ENCODE measurements at regions of chr4 and their contacts with region 1.

Region 1: GRCh38 chr4:15001869-15002658 is at the start of gene CPEB2:
- DNase-seq: peak; percentile 93
- H3K4me3 Mint-ChIP-seq: peak within 1 kb of the TSS; percentile 87
- H3K27ac Mint-ChIP-seq: peak within 1 kb of the TSS; percentile 94
- H3K4me1 Mint-ChIP-seq: peaks cover 16% of the 10 kb centered on the region
- H3K27me3 Mint-ChIP-seq: no peaks in the 10 kb centered on the region
- total RNA-seq, gene CPEB2: 9.5 to 9.8 TPM

Region 2: DNA sequence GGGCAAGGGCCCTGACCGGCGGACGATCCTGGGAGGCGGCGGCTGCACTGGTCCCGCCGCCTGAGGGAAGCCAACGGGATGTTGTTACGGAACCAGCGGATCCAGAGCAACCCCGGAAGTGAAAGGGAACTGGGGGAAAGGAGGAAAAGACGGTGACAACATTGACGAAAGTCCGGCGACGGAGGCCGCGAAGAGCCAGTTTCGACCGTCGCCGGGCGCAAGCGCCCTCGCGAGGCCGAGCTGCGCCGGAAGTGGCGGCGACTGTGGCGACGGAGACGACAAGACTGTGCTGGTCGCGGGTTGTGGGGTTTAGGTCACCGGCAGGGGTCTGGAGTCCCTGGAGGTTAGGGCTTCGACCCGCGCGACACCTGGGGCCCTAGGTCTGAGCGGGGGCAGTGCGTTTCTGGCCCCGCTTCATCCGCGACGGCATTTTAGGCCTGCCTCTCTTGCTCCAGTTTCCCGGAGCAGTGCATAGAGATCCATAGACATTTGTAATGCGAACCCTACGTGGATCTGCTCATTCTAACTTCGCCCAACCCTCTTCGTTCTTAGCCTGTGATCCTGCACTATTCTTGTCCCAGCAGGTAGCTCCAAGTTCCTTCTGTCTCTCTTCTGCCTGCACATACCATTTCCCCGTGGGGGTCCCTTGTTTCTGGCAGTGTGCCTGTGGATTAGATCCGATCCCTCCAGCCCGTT is 1374.3 kb before region 1 on chr4 and contains the start of gene BOD1L1:
- CTCF ChIA-PET with region 1: no interaction called
- POLR2A ChIA-PET with region 1: no interaction called
- intact Hi-C with region 1: loop called (anchors 2 kb)
- DNase-seq: peak; percentile 89
- H3K4me3 Mint-ChIP-seq: peak within 1 kb of the TSS; percentile 97
- H3K27ac Mint-ChIP-seq: peak within 1 kb of the TSS; percentile 94
- H3K4me1 Mint-ChIP-seq: peaks cover 41% of the 10 kb centered on the region
- H3K27me3 Mint-ChIP-seq: no peaks in the 10 kb centered on the region
- total RNA-seq, gene BOD1L1: 25.5 to 31.2 TPM

Region 3: DNA sequence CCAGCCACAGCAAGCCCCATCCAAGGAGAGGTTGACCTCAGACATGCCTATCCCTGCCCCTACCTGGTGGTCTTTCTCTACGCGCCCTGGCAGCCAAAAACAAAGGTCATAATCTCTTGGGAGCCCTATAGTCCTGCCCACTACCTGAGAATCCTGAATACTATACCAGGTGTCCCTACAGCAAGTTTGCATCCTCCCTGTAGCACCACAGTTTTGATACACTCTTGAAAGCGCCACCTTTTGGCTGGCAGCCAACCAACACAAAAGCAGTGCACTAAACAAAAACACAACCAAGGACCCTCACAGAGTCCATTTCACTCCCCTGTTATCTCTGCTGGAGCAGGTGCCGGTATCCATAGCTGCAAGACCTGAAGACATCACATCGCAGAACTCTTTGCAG is 523.6 kb before region 1 on chr4:
- CTCF ChIA-PET with region 1: no interaction called
- POLR2A ChIA-PET with region 1: no interaction called
- intact Hi-C with region 1: no loop called
- DNase-seq: no peak
- H3K4me3 Mint-ChIP-seq: no peak overlapping the region
- H3K27ac Mint-ChIP-seq: no peak overlapping the region
- H3K4me1 Mint-ChIP-seq: no peaks in the 10 kb centered on the region
- H3K27me3 Mint-ChIP-seq: no peaks in the 10 kb centered on the region

Region 4: GRCh38 chr4:14920759-14921320 is 81.2 kb before region 1 on chr4:
- CTCF ChIA-PET with region 1: interaction called, 3 read pairs
- POLR2A ChIA-PET with region 1: no interaction called
- intact Hi-C with region 1: loop called (anchors 2 kb)
- DNase-seq: peak; percentile 44
- H3K4me3 Mint-ChIP-seq: no peak overlapping the region
- H3K27ac Mint-ChIP-seq: no peak overlapping the region
- H3K4me1 Mint-ChIP-seq: no peaks in the 10 kb centered on the region
- H3K27me3 Mint-ChIP-seq: peaks cover 6% of the 10 kb centered on the region

Region 5: GRCh38 chr4:15182600-15183220 is 180.6 kb after region 1 on chr4:
- CTCF ChIA-PET with region 1: interaction called, 3 read pairs
- POLR2A ChIA-PET with region 1: interaction called, 5 read pairs
- intact Hi-C with region 1: loop called (anchors 2 kb)
- DNase-seq: peak; percentile 44
- H3K4me3 Mint-ChIP-seq: peak overlapping the region; percentile 35
- H3K27ac Mint-ChIP-seq: peak overlapping the region; percentile 64
- H3K4me1 Mint-ChIP-seq: peaks cover 24% of the 10 kb centered on the region
- H3K27me3 Mint-ChIP-seq: no peaks in the 10 kb centered on the region

Region 6: DNA sequence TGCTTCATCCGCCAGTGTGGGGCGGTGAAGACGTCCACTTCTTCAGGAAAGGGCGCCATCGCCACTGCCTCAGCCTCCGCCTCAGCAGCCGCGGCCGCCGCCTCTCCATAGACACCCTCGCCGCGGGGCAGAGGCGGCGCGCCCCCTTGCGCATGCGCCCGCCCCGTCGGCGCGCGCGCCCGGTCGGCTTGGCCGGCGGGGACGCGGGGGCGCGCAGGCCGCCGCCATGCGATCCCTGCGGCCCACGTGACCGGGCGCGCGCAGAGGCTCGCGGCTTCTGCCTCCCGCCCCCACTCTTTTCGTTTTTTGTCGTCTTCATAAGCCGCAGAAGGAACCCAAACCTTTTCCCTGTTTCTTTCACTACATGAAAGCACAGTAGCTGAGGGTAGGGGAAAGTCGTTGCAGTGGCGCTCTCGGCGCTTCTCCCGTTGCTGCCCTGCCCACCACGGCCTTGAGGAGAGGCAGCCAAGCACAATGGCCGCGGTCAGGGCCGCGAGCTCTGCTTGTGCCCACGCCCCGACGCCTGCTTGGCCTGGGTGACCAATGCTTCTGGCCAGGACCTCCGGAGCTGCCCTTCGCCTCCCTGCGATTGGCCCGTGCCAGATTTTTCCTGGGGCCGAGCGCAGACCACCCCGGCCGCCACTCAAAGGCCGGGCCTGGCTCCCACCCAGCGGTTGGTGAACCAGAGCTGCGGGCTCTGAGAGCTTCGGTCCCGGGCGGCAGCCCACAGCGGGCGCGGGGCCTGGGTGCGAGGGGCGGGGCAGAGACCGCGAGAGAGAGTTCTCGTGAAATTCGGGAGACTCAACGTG is 653.4 kb after region 1 on chr4 and contains the start of gene FBXL5:
- CTCF ChIA-PET with region 1: interaction called, 4 read pairs
- POLR2A ChIA-PET with region 1: interaction called, 3 read pairs
- intact Hi-C with region 1: loop called (anchors 1 kb)
- DNase-seq: peak; percentile 89
- H3K4me3 Mint-ChIP-seq: peak within 1 kb of the TSS; percentile 93
- H3K27ac Mint-ChIP-seq: peak within 1 kb of the TSS; percentile 94
- H3K4me1 Mint-ChIP-seq: peaks cover 61% of the 10 kb centered on the region
- H3K27me3 Mint-ChIP-seq: no peaks in the 10 kb centered on the region
- total RNA-seq, gene FBXL5: 26.5 to 30.4 TPM

Measured in activated CD4-positive, alpha-beta memory T cell treated with anti-CD3 and anti-CD28 coated beads for 36 hours (primary cell).